ENCODE measurements at regions of chr17 and their contacts with region 1.

Region 1: DNA sequence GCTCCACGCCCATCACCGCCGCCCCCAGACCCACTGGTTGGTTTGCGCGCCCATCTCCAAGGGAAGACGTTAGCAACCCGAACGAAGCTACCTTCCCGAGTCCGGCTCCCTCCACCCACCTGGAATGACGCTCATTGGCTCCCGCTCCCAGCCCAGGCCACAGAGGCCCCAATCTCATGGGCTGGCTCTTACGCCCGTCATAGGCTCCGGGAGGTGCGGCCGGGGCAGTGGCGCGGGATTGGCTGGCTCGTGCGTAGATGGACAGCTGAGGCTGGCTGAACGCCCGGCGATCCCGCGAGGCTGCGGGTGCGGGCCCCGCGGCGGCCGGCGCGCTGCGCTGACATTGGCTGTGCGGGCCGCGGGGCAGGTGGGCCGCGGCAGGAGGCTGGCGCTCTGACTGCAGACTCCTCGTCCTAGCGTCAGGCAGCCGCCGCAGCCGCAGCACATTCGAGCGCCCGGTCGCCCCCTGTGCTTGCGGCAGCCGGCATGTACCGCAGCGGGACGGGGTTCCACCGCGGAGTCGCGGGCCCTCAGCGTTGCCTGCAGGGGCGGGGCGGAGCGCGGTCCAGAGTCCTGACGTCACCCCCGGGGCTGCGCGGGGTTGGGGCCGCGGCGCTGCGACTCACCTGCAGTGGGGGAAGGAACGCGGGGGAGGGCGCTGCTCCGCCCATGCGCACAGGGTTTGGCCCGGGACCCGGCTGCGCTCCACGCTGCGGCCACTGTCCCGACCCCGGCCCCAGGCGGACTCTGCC is 453 bp upstream of the MYH10 start:
- DNase-seq: peak; percentile 98 to 100 (median 99)

Region 2: GRCh38 chr17:8383143-8383822 is 247.7 kb before region 1 on chr17 and contains the start of gene RPL26:
- intact Hi-C with region 1: loop called (anchors 2 kb)
- DNase-seq: peak; percentile 90 to 99 (median 94)

Region 3: GRCh38 chr17:8435245-8436168 is 195.5 kb before region 1 on chr17 and contains the start of gene NDEL1:
- intact Hi-C with region 1: loop called (anchors 5 kb)
- DNase-seq: peak; percentile 98 to 100 (median 99)

Region 4: GRCh38 chr17:8488901-8489300 is 142.1 kb before region 1 on chr17:
- intact Hi-C with region 1: loop called (anchors 10 kb)
- DNase-seq: no peak

Region 5: GRCh38 chr17:8532021-8532420 is 99.0 kb before region 1 on chr17:
- intact Hi-C with region 1: no loop called
- DNase-seq: no peak

Region 6: DNA sequence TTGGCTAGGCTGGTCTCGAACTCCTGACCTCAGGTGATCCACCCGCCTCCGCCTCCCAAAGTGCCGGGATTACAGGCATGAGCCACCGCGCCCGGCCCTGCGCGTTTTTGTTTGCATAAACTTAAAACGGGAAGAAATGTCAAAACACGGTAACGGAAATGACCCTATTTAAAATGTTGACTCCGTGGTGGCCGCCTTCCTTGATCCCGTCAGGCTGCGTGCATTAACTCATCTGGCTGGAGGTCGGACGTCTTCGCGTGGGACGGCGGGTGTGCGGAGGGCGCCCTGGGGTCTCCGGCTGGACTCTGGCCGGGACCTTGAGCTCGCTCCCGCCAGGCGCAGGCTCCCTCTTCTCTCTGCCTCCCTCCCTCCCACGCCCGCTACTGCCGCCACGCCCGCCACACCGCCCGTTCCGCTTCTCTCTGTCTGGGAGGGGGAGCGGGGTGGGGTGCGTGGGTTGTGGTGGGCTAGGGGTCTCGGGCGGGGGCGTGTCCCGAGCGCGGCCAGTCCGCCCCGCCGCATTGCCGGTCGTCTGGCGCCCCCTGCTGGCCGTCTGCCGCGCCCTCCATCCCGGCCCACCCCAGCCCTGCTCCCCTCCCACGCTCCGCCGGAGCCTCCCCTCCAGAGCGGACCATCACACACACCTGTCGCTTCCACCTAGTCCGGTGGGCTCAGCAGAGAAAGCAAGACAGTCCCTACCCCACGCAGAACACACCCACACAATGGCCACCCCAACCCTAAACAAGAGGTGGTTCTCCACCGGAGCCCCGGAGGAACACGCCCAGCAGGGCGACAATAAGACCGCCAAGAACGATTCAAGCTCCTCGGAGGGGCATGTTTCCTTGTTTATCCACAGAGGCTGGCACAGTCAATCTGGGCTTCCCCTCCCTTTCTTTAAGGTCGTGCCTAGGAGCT is 114.9 kb after region 1 on chr17:
- intact Hi-C with region 1: loop called (anchors 5 kb)
- DNase-seq: peak in 9 of 10 donors; percentile 36 to 93 (median 73)

Measured in posterior cingulate gyrus (tissue), 11 donors.